ENCODE measurements at regions of chr1 and their contacts with region 1.

Region 1: DNA sequence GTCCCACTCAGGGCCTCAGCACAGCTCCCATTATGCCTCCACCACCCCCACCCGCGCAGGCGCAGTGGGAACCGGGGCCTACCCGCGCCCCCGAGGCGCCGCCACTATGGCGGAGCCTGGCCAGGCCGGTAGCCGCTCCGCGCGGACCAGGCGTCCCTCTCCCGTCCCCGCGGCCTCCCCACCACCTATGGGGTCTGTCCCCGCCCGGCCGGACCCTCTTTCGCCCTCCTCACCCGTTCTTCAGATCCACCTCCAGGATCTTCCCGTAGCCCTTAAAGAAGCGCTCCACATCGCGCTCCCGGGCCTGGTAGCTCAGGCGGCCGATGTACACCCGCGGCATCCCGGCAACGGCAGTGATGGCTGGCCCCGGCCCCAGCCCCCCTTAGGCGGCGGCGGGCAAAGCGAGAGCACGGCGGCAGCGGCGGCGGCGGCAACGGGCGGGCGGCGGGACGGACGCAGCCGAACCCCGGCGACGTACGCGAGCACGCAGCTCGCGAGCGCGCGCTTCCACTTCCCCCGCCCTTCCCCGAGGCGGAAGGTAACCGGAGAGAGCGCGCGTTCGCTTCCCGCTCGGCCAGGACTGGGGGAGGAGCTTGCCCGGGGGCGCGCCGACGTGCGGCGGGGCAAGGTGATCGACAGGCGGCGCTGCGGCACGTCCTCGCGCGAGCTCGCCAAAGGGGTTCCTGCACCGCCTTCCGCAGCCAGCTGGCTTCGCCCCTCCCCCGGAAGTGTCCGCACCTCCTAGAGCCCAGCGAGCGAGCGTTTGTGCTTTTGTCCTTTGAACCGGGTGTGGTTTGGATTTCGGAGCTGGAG is at the start of gene SRSF4:
- DNase-seq: peak; percentile 96 to 99 (median 98)
- ATAC-seq: peak; percentile 89 to 91
- H3K4me3 Mint-ChIP-seq: peak within 1 kb of the TSS; percentile 89 to 96 (median 94)
- H3K27ac Mint-ChIP-seq: peak within 1 kb of the TSS; percentile 85 to 97 (median 96)
- H3K4me1 Mint-ChIP-seq: peaks cover 25 to 52% (median 45%) of the 10 kb centered on the region in 4 donors
- H3K27me3 Mint-ChIP-seq: no peaks in the 10 kb centered on the region
- polyA plus RNA-seq, gene SRSF4: 73.2 to 104 (median 81.5) TPM

Region 2: DNA sequence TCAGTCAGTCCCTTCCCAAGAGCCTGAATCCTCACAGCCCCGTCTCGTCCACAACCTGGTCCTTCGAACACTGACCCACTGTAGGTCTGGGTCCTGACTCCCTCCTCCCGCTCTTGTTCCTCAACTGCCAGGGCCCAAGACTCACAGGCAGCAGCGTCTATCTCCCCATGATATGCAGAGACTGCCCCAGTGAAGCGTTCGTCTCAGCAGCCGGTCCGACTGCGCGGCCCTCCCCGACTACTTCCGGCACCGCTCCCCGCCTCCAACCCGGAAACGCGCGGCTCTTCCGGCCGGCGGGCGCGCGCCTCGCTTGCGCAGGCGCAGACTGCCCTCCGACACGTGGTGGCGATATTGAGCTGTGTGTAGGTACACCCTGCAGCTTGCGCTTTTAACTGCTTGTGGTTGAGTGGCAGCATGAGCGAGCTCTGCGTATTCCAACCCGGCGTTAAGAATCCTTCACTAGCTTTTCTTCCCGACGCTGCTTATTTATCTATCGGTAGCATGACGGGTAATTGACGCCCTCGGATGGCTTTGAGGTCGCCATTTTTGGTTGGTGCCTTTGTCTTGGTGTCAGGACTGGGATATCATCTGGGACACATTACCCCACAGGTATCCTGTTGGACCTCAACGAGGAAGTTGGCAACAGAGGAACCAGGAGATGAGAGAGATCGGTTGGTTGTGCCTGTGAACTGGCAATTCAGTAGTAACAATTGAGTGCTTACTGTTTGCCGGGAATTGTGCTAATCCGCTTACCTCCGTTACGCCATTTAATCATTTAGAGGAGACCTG is 538.6 kb before region 1 on chr1 and contains the start of gene TAF12:
- POLR2A ChIA-PET with region 1: interaction called, 19 read pairs
- DNase-seq: peak; percentile 78 to 95 (median 90)
- ATAC-seq: peak; percentile 85 to 86
- H3K4me3 Mint-ChIP-seq: peak within 1 kb of the TSS; percentile 96 to 100 (median 99)
- H3K27ac Mint-ChIP-seq: peak within 1 kb of the TSS; percentile 96 to 99 (median 98)
- H3K4me1 Mint-ChIP-seq: peaks cover 24 to 71% (median 57%) of the 10 kb centered on the region in 4 donors
- H3K27me3 Mint-ChIP-seq: no peaks in the 10 kb centered on the region
- polyA plus RNA-seq, gene TAF12: 42.4 to 50.1 (median 47.3) TPM

Region 3: GRCh38 chr1:28668191-28668955 is 513.2 kb before region 1 on chr1 and contains the start of gene GMEB1:
- POLR2A ChIA-PET with region 1: interaction called, 12 read pairs
- DNase-seq: peak; percentile 67 to 91 (median 82)
- ATAC-seq: peak; percentile 71 to 72
- H3K4me3 Mint-ChIP-seq: peak within 1 kb of the TSS; percentile 84 to 98 (median 94)
- H3K27ac Mint-ChIP-seq: peak within 1 kb of the TSS; percentile 90 to 100 (median 98)
- H3K4me1 Mint-ChIP-seq: peaks cover 12 to 31% (median 24%) of the 10 kb centered on the region in 4 donors
- H3K27me3 Mint-ChIP-seq: no peaks in the 10 kb centered on the region
- polyA plus RNA-seq, gene GMEB1: 12.5 to 18.2 (median 17.1) TPM

Region 4: GRCh38 chr1:28885472-28885877 is 296.1 kb before region 1 on chr1:
- POLR2A ChIA-PET with region 1: interaction called, 16 read pairs
- DNase-seq: no peak
- ATAC-seq: no peak
- H3K4me3 Mint-ChIP-seq: peak overlapping the region in 6 of 10 donors; percentile 8 to 92 (median 83)
- H3K27ac Mint-ChIP-seq: peak overlapping the region in 9 of 10 donors; percentile 80 to 97 (median 94)
- H3K4me1 Mint-ChIP-seq: peaks cover 27 to 68% (median 62%) of the 10 kb centered on the region in 4 donors
- H3K27me3 Mint-ChIP-seq: no peaks in the 10 kb centered on the region

Region 5: GRCh38 chr1:29230553-29231378 is 49.1 kb after region 1 on chr1 and contains the start of gene MECR:
- POLR2A ChIA-PET with region 1: interaction called, 10 read pairs
- DNase-seq: peak; percentile 89 to 98 (median 95)
- ATAC-seq: peak; percentile 94 to 96
- H3K4me3 Mint-ChIP-seq: peak within 1 kb of the TSS; percentile 91 to 99 (median 93)
- H3K27ac Mint-ChIP-seq: peak within 1 kb of the TSS; percentile 84 to 98 (median 96)
- H3K4me1 Mint-ChIP-seq: peaks cover 11 to 26% (median 21%) of the 10 kb centered on the region in 4 donors
- H3K27me3 Mint-ChIP-seq: peaks cover 0 to 8% (median 6%) of the 10 kb centered on the region in 5 donors
- polyA plus RNA-seq, gene MECR: 17.9 to 24.1 (median 20.4) TPM